Activated CD4-positive, alpha-beta T cell treated with anti-CD3 and anti-CD28 coated beads for 36 hours (primary cell): ENCODE measurements at regions of chr16 and their contacts with region 1.

Region 1: GRCh38 chr16:31202414-31203375 is at the start of gene PYCARD:
- DNase-seq: peak; percentile 53
- ATAC-seq: peak; percentile 7
- H3K4me3 Mint-ChIP-seq: peak within 1 kb of the TSS; percentile 71
- H3K27ac Mint-ChIP-seq: peak within 1 kb of the TSS; percentile 52
- H3K4me1 Mint-ChIP-seq: peaks cover 47% of the 10 kb centered on the region
- H3K27me3 Mint-ChIP-seq: peaks cover 3% of the 10 kb centered on the region
- total RNA-seq, gene PYCARD: 5.7 TPM

Region 2: GRCh38 chr16:31073968-31074813 is 128.5 kb before region 1 on chr16 and contains the starts of genes ZNF646 and ZNF668:
- CTCF ChIA-PET with region 1: no interaction called
- POLR2A ChIA-PET with region 1: no interaction called
- intact Hi-C with region 1: no loop called
- DNase-seq: peak; percentile 99
- ATAC-seq: peak; percentile 83
- H3K4me3 Mint-ChIP-seq: peak within 1 kb of the TSS; percentile 97
- H3K27ac Mint-ChIP-seq: peak within 1 kb of the TSS; percentile 98
- H3K4me1 Mint-ChIP-seq: peaks cover 30% of the 10 kb centered on the region
- H3K27me3 Mint-ChIP-seq: no peaks in the 10 kb centered on the region
- total RNA-seq, gene ZNF646: 21.3 to 25.8 TPM
- total RNA-seq, gene ZNF668: 9.2 to 9.9 TPM

Region 3: DNA sequence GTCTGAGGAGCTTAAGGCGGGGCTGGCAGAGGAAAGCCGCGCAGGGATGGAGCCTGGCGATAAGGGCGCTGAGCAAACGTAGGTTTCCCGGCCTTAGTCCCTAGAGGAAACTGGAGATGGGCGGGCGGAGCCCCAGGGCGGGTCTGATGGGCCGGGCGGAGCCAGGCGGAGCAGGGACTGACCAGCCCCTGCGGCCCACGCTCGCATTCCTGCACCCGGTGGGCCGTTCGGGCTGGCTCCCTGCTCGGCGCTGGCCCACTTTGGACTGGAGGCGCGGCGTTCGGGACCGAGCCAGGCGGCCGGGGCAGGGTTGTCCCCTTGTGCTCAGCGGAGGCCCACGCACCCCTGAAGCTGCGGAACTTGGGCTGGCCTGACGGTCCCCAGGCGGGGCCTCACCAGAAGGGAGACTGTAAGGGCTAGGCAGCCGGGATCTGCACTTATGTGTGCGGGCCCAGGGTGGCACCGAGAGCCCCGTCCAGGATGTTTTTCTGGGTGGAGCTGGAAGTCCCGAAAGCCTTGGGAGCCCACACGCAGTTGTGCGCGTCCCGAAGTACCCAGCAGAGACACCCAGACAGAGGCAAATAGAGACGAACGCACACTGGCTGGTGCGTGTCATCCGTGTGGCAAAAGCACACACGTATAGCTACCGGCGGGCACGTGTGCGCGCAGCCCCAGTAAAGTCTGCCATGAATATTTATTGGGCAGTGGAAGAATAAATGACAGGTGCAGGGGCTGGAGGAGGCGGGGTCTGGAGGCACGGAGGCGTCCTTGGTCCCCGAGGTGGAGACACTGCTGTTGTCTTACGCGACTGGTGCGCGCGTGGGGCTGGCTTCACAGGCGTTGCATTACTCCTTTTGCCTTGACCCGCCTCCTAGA is 12.8 kb after region 1 on chr16:
- CTCF ChIA-PET with region 1: interaction called, 7 read pairs
- POLR2A ChIA-PET with region 1: interaction called, 13 read pairs
- intact Hi-C with region 1: no loop called
- DNase-seq: peak; percentile 45
- ATAC-seq: peak; percentile 45
- H3K4me3 Mint-ChIP-seq: peak overlapping the region; percentile 52
- H3K27ac Mint-ChIP-seq: no peak overlapping the region
- H3K4me1 Mint-ChIP-seq: peaks cover 23% of the 10 kb centered on the region
- H3K27me3 Mint-ChIP-seq: peaks cover 44% of the 10 kb centered on the region